H1 (cell line): ENCODE measurements at regions of chr11 and their contacts with region 1.

Region 1: GRCh38 chr11:13384908-13385640 is 77.9 kb downstream of the BTBD10 start:
- DNase-seq: peak; percentile 15 to 58
- H3K4me3 ChIP-seq: no peak overlapping the region
- H3K27ac ChIP-seq: no peak overlapping the region
- H3K4me1 ChIP-seq: no peaks in the 10 kb centered on the region
- H3K27me3 ChIP-seq: no peaks in the 10 kb centered on the region
- CTCF ChIP-seq: peak in 2 of 3 experiments; percentile 58 to 68; a peak in 3 of 4 replicates
- EP300 ChIP-seq: no peak
- POLR2A ChIP-seq: no peak
- RAD21 ChIP-seq: peak; percentile 59 to 67

Region 2: GRCh38 chr11:13008625-13009475 is 376.2 kb before region 1 on chr11 and contains the start of gene RASSF10:
- CTCF ChIA-PET with region 1: no interaction called
- POLR2A ChIA-PET with region 1: no interaction called
- DNase-seq: peak; percentile 77 to 95
- H3K4me3 ChIP-seq: peak within 1 kb of the TSS; percentile 42 to 58 (median 46)
- H3K27ac ChIP-seq: peak within 1 kb of the TSS; percentile 37; the same call in 1 of the 2 replicates
- H3K4me1 ChIP-seq: peaks cover 8 to 32% (median 18%) of the 10 kb centered on the region in 4 experiments
- H3K27me3 ChIP-seq: peaks cover 13 to 56% (median 40%) of the 10 kb centered on the region in 4 experiments
- CTCF ChIP-seq: no peak
- EP300 ChIP-seq: no peak
- POLR2A ChIP-seq: peak in 1 of 2 experiments; percentile 78; a peak in 2 of 3 replicates
- RAD21 ChIP-seq: no peak; a peak in 1 of 4 replicates
- total RNA-seq, gene RASSF10: 1.5 and 1.8 TPM in 2 replicates

Region 3: GRCh38 chr11:13368041-13368446 is 17.0 kb before region 1 on chr11:
- CTCF ChIA-PET with region 1: interaction called, 129 read pairs
- POLR2A ChIA-PET with region 1: no interaction called
- DNase-seq: no peak
- H3K4me3 ChIP-seq: no peak overlapping the region
- H3K27ac ChIP-seq: no peak overlapping the region
- H3K4me1 ChIP-seq: peaks cover 0 to 3% (median 0%) of the 10 kb centered on the region in 4 experiments; a peak in 2 of 7 replicates
- H3K27me3 ChIP-seq: no peaks in the 10 kb centered on the region
- CTCF ChIP-seq: no peak
- EP300 ChIP-seq: no peak
- POLR2A ChIP-seq: no peak
- RAD21 ChIP-seq: no peak

Region 4: DNA sequence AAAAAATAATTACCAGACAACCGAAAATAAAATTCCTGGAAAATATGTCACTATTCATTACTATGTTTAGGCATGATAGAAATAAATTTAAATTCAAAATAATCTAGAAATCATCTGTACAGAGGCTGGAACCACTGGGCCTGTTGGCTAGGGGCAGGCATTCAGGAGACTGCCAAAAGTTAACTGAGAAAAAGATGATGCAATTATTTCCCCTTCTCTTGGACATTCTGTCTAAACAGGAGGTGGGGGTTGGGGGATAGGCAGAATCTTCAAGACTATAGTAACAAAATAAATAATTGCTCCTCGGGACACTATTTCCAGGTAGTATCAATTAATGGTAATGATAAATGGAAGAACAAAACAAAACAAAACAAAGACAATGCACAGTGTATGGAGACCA is 63.8 kb after region 1 on chr11:
- CTCF ChIA-PET with region 1: no interaction called
- POLR2A ChIA-PET with region 1: no interaction called
- DNase-seq: no peak
- H3K4me3 ChIP-seq: no peak overlapping the region
- H3K27ac ChIP-seq: no peak overlapping the region
- H3K4me1 ChIP-seq: no peaks in the 10 kb centered on the region; a peak in 2 of 7 replicates
- H3K27me3 ChIP-seq: no peaks in the 10 kb centered on the region
- CTCF ChIP-seq: no peak
- EP300 ChIP-seq: no peak
- POLR2A ChIP-seq: no peak
- RAD21 ChIP-seq: no peak

Region 5: DNA sequence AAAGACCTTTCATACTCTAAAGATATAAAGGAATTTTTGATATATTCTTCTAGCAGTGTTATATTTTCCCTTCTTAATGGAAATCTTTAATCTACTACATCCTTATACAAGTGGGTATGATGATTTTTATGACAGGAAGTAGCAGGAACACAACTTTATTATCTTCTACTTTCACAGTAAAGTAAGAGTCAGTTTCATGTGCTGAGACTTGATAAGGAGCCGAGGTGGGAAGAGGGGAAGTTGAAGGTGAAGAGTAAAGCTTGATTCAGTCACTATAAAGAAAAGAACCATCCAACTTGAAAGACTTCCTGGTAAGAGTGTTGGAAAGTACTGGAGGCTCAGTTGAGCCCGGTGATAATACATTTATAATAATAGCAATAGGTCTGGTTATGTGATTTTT is 192.8 kb after region 1 on chr11:
- CTCF ChIA-PET with region 1: no interaction called
- POLR2A ChIA-PET with region 1: no interaction called
- DNase-seq: no peak
- H3K4me3 ChIP-seq: no peak overlapping the region
- H3K27ac ChIP-seq: no peak overlapping the region
- H3K4me1 ChIP-seq: no peaks in the 10 kb centered on the region
- H3K27me3 ChIP-seq: no peaks in the 10 kb centered on the region
- CTCF ChIP-seq: no peak
- EP300 ChIP-seq: no peak
- POLR2A ChIP-seq: no peak
- RAD21 ChIP-seq: no peak